ENCODE measurements at regions of chr12 and their contacts with region 1.

Region 1: GRCh38 chr12:121476477-121476876 is 76.6 kb downstream of the RNF34 start:
- DNase-seq: no peak
- H3K4me3 Mint-ChIP-seq: no peak overlapping the region
- H3K27ac Mint-ChIP-seq: no peak overlapping the region
- H3K4me1 Mint-ChIP-seq: no peaks in the 10 kb centered on the region
- H3K27me3 Mint-ChIP-seq: no peaks in the 10 kb centered on the region
- CTCF ChIP-seq: no peak

Region 2: GRCh38 chr12:121296618-121297434 is 179.7 kb before region 1 on chr12 and contains the start of gene CAMKK2:
- CTCF ChIA-PET with region 1: no interaction called
- POLR2A ChIA-PET with region 1: no interaction called
- intact Hi-C with region 1: no loop called
- DNase-seq: peak; percentile 82
- H3K4me3 Mint-ChIP-seq: peak within 1 kb of the TSS; percentile 78
- H3K27ac Mint-ChIP-seq: peak within 1 kb of the TSS; percentile 49
- H3K4me1 Mint-ChIP-seq: peaks cover 11% of the 10 kb centered on the region
- H3K27me3 Mint-ChIP-seq: no peaks in the 10 kb centered on the region
- CTCF ChIP-seq: peak; percentile 26
- total RNA-seq, gene CAMKK2: 31.9 and 36.3 TPM in 2 replicates

Region 3: GRCh38 chr12:121334513-121335343 is 141.7 kb before region 1 on chr12:
- CTCF ChIA-PET with region 1: no interaction called
- POLR2A ChIA-PET with region 1: no interaction called
- intact Hi-C with region 1: no loop called
- DNase-seq: peak; percentile 66
- H3K4me3 Mint-ChIP-seq: no peak overlapping the region
- H3K27ac Mint-ChIP-seq: no peak overlapping the region
- H3K4me1 Mint-ChIP-seq: no peaks in the 10 kb centered on the region
- H3K27me3 Mint-ChIP-seq: no peaks in the 10 kb centered on the region
- CTCF ChIP-seq: peak; percentile 67

Region 4: GRCh38 chr12:121494093-121494787 is 17.8 kb after region 1 on chr12:
- CTCF ChIA-PET with region 1: interaction called, 23 read pairs
- POLR2A ChIA-PET with region 1: no interaction called
- intact Hi-C with region 1: no loop called
- DNase-seq: peak; percentile 51
- H3K4me3 Mint-ChIP-seq: no peak overlapping the region
- H3K27ac Mint-ChIP-seq: no peak overlapping the region
- H3K4me1 Mint-ChIP-seq: no peaks in the 10 kb centered on the region
- H3K27me3 Mint-ChIP-seq: no peaks in the 10 kb centered on the region
- CTCF ChIP-seq: peak; percentile 73